ENCODE measurements at regions of chr15 and their contacts with region 1.

Region 1: GRCh38 chr15:74382004-74382816 is 14.8 kb upstream of the CYP11A1 start:
- DNase-seq: peak; percentile 78
- H3K4me3 ChIP-seq: no peak overlapping the region
- H3K27ac ChIP-seq: no peak overlapping the region
- H3K4me1 ChIP-seq: no peaks in the 10 kb centered on the region
- H3K27me3 ChIP-seq: no peaks in the 10 kb centered on the region
- CTCF ChIP-seq: peak; percentile 97

Region 2: DNA sequence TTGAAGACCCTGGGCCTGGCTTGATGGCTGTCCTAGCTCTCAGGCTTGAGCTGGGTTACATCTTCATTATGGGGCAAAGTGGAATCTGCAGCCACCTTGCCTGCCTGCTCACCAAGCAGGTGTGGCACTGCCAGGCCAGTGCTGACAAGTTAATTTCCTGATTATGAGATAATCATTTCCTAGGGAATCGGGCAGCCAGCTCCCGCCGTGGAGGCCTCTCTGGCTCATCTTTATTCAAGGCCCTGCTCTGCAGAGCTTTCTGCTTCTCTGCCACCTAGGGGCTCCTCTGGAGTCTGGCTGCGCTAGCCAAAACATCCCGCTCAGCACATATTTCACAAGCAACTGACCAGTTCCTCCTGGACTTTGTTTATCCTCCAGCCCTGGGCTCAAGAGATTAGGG is 446.0 kb before region 1 on chr15:
- CTCF ChIA-PET with region 1: no interaction called
- POLR2A ChIA-PET with region 1: no interaction called
- intact Hi-C with region 1: no loop called
- DNase-seq: peak; percentile 45
- H3K4me3 ChIP-seq: no peak overlapping the region
- H3K27ac ChIP-seq: peak overlapping the region; percentile 51
- H3K4me1 ChIP-seq: peaks cover 40% of the 10 kb centered on the region
- H3K27me3 ChIP-seq: no peaks in the 10 kb centered on the region
- CTCF ChIP-seq: peak; percentile 43

Region 3: GRCh38 chr15:74431645-74432044 is 49.4 kb after region 1 on chr15:
- CTCF ChIA-PET with region 1: interaction called, 10 read pairs
- POLR2A ChIA-PET with region 1: interaction called, 4 read pairs
- intact Hi-C with region 1: no loop called
- DNase-seq: no peak
- H3K4me3 ChIP-seq: no peak overlapping the region
- H3K27ac ChIP-seq: no peak overlapping the region
- H3K4me1 ChIP-seq: peaks cover 11% of the 10 kb centered on the region
- H3K27me3 ChIP-seq: peaks cover 26% of the 10 kb centered on the region
- CTCF ChIP-seq: no peak

Region 4: DNA sequence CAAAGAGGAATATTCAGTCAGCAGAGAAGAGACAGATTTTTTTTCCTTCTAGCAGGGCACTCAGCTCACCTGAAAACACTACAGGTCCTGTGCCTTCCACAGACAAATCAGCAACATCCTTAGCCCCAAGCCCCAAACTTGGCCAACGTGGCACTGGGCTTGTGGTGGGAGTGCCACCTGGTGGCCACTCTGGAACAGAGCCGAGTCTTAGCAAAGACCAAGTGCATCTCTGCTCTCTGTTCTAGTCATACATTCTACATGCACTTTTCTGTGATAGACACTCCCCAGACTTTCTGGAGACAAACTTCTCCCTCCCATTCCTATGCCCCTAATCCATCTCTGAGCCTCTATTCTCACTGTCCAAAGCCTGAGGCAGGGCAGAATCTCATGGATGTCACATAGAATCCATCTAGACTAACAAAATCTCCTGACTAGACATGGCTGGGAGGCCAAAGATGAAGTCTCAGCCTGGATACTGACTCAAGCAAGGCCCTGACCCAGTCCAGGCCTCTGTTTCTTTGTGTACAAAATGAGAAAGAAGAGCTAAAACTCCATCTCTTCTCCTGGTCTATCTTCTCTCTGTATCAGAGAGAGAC is 56.6 kb after region 1 on chr15:
- CTCF ChIA-PET with region 1: interaction called, 8 read pairs
- POLR2A ChIA-PET with region 1: no interaction called
- intact Hi-C with region 1: loop called (anchors 1 kb)
- DNase-seq: peak; percentile 75
- H3K4me3 ChIP-seq: no peak overlapping the region
- H3K27ac ChIP-seq: no peak overlapping the region
- H3K4me1 ChIP-seq: peaks cover 4% of the 10 kb centered on the region
- H3K27me3 ChIP-seq: no peaks in the 10 kb centered on the region
- CTCF ChIP-seq: peak; percentile 94

Region 5: DNA sequence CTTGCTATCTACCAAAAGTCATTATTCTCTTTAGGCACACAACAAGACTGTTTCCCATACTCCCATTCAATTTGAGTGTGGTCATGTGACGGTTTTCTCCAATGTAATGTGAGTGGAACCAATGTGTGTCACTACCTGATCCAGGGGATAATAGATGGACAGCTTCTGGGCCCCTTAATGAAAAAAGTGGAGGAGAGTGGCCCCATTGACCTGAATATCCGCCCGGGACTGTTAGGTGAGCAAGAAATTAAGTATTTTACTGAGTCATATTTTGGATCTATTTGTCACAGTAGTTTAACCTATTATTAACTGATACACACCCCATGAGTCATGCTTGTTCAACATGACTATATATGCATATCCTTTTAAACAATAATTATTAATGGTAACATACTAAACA is 143.7 kb after region 1 on chr15:
- CTCF ChIA-PET with region 1: no interaction called
- POLR2A ChIA-PET with region 1: no interaction called
- intact Hi-C with region 1: no loop called
- DNase-seq: no peak
- H3K4me3 ChIP-seq: no peak overlapping the region
- H3K27ac ChIP-seq: no peak overlapping the region
- H3K4me1 ChIP-seq: no peaks in the 10 kb centered on the region
- H3K27me3 ChIP-seq: no peaks in the 10 kb centered on the region
- CTCF ChIP-seq: no peak